Activated naive CD4-positive, alpha-beta T cell treated with anti-CD3 and anti-CD28 coated beads, Interleukin-2, amount 10 ng/mL, durations not matched to agents 7 days and 5 days (primary cell): ENCODE measurements at regions of chr1 and their contacts with region 1.

Region 1: GRCh38 chr1:151909150-151910149 is at the start of gene THEM4:
- DNase-seq: peak; percentile 94
- H3K4me3 Mint-ChIP-seq: peak within 1 kb of the TSS; percentile 82
- H3K27ac Mint-ChIP-seq: peak within 1 kb of the TSS; percentile 84
- H3K4me1 Mint-ChIP-seq: peaks cover 46% of the 10 kb centered on the region
- H3K27me3 Mint-ChIP-seq: peaks cover 4% of the 10 kb centered on the region

Region 2: GRCh38 chr1:151898513-151898991 is 10.9 kb before region 1 on chr1:
- CTCF ChIA-PET with region 1: interaction called, 13 read pairs
- DNase-seq: peak; percentile 69
- H3K4me3 Mint-ChIP-seq: peak overlapping the region; percentile 52
- H3K27ac Mint-ChIP-seq: peak overlapping the region; percentile 93
- H3K4me1 Mint-ChIP-seq: peaks cover 58% of the 10 kb centered on the region
- H3K27me3 Mint-ChIP-seq: no peaks in the 10 kb centered on the region